HepG2 (cell line): ENCODE measurements at regions of chr12 and their contacts with region 1.

Region 1: GRCh38 chr12:34625116-34625515 is 602.8 kb downstream of the ALG10 start:
- DNase-seq: peak; percentile 29
- ATAC-seq: no peak
- H3K4me3 ChIP-seq: no peak overlapping the region
- H3K27ac ChIP-seq: no peak overlapping the region
- H3K4me1 ChIP-seq: no peaks in the 10 kb centered on the region
- H3K27me3 ChIP-seq: no peaks in the 10 kb centered on the region
- CTCF ChIP-seq: peak; percentile 53
- EP300 ChIP-seq: no peak
- POLR2A ChIP-seq: no peak
- RAD21 ChIP-seq: 0 out of 2 replicates have a peak, but pooled peaks have one; percentile 15

Region 2: GRCh38 chr12:34126239-34126641 is 498.9 kb before region 1 on chr12:
- CTCF ChIA-PET with region 1: interaction called, 5 read pairs
- POLR2A ChIA-PET with region 1: no interaction called
- in situ Hi-C with region 1: loop called (anchors 10 kb)
- intact Hi-C with region 1: loop called (anchors 1 kb)
- DNase-seq: peak; percentile 1
- ATAC-seq: peak; percentile 76
- H3K4me3 ChIP-seq: peak overlapping the region; percentile 44 to 62 (median 56)
- H3K27ac ChIP-seq: no peak overlapping the region
- H3K4me1 ChIP-seq: no peaks in the 10 kb centered on the region
- H3K27me3 ChIP-seq: no peaks in the 10 kb centered on the region
- CTCF ChIP-seq: no peak
- EP300 ChIP-seq: no peak
- POLR2A ChIP-seq: no peak
- RAD21 ChIP-seq: no peak

Region 3: DNA sequence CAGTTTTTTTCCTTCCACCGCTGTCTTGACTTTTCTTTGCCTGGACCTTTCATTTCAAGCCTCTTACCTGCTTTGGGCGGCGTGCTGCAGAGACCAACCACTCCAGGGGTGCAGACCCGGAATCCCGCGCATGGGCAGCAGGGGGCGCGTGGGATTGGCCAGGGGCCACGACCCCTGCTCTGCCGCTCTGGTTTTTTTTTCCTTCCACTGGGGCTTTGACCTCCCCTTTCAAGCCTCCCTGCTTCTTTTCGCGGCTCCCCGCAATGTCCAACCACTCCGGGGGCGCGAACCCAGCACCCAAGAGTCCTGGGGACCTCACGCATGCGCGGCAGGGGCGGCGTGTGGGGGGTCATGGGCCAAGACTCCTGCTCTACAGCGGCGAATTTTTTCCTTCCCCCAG is 277.7 kb before region 1 on chr12:
- CTCF ChIA-PET with region 1: interaction called, 3 read pairs
- POLR2A ChIA-PET with region 1: no interaction called
- in situ Hi-C with region 1: no loop called
- intact Hi-C with region 1: loop called (anchors 1 kb)
- DNase-seq: peak; percentile 18
- ATAC-seq: peak; percentile 72
- H3K4me3 ChIP-seq: no peak overlapping the region
- H3K27ac ChIP-seq: no peak overlapping the region
- H3K4me1 ChIP-seq: peaks cover 19% of the 10 kb centered on the region; the same call in 1 of the 2 replicates
- H3K27me3 ChIP-seq: peaks cover 10 to 40% of the 10 kb centered on the region in 2 experiments
- CTCF ChIP-seq: peak; percentile 70
- EP300 ChIP-seq: no peak
- POLR2A ChIP-seq: no peak
- RAD21 ChIP-seq: no peak